CD8-positive, alpha-beta T cell (primary cell): ENCODE measurements at regions of chr5 and their contacts with region 1.

Region 1: GRCh38 chr5:139633295-139634027 is 14.7 kb upstream of the CXXC5 start:
- DNase-seq: peak in 8 of 9 experiments; percentile 45 to 85 (median 71)
- ATAC-seq: peak; percentile 35
- H3K4me3 ChIP-seq: no peak overlapping the region
- H3K4me3 Mint-ChIP-seq: no peak overlapping the region
- H3K27ac ChIP-seq: no peak overlapping the region
- H3K27ac Mint-ChIP-seq: peak overlapping the region; percentile 24
- H3K4me1 ChIP-seq: peaks cover 42% of the 10 kb centered on the region
- H3K4me1 Mint-ChIP-seq: peaks cover 41% of the 10 kb centered on the region
- H3K27me3 ChIP-seq: no peaks in the 10 kb centered on the region
- H3K27me3 Mint-ChIP-seq: no peaks in the 10 kb centered on the region
- CTCF ChIP-seq: peak; percentile 89

Region 2: GRCh38 chr5:139422307-139422893 is 211.1 kb before region 1 on chr5:
- CTCF ChIA-PET with region 1: interaction called, 20 read pairs
- POLR2A ChIA-PET with region 1: no interaction called
- intact Hi-C with region 1: no loop called
- DNase-seq: peak in 8 of 9 experiments; percentile 15 to 86 (median 52)
- ATAC-seq: peak; percentile 99
- H3K4me3 ChIP-seq: no peak overlapping the region
- H3K4me3 Mint-ChIP-seq: no peak overlapping the region
- H3K27ac ChIP-seq: no peak overlapping the region
- H3K27ac Mint-ChIP-seq: no peak overlapping the region
- H3K4me1 ChIP-seq: no peaks in the 10 kb centered on the region
- H3K4me1 Mint-ChIP-seq: peaks cover 5% of the 10 kb centered on the region
- H3K27me3 ChIP-seq: no peaks in the 10 kb centered on the region
- H3K27me3 Mint-ChIP-seq: no peaks in the 10 kb centered on the region
- CTCF ChIP-seq: peak; percentile 89

Region 3: GRCh38 chr5:139574641-139575312 is 58.7 kb before region 1 on chr5:
- CTCF ChIA-PET with region 1: interaction called, 35 read pairs
- POLR2A ChIA-PET with region 1: interaction called, 4 read pairs
- intact Hi-C with region 1: loop called (anchors 2 to 5 kb)
- DNase-seq: peak in 5 of 9 experiments; percentile 16 to 76 (median 45)
- ATAC-seq: peak; percentile 42
- H3K4me3 ChIP-seq: no peak overlapping the region
- H3K4me3 Mint-ChIP-seq: peak overlapping the region; percentile 20
- H3K27ac ChIP-seq: peak overlapping the region in 1 of 2 experiments; percentile 34
- H3K27ac Mint-ChIP-seq: peak overlapping the region; percentile 43
- H3K4me1 ChIP-seq: peaks cover 75% of the 10 kb centered on the region
- H3K4me1 Mint-ChIP-seq: peaks cover 79% of the 10 kb centered on the region
- H3K27me3 ChIP-seq: no peaks in the 10 kb centered on the region
- H3K27me3 Mint-ChIP-seq: no peaks in the 10 kb centered on the region
- CTCF ChIP-seq: peak; percentile 72

Region 4: GRCh38 chr5:139670369-139671095 is 37.1 kb after region 1 on chr5:
- CTCF ChIA-PET with region 1: interaction called, 64 read pairs
- POLR2A ChIA-PET with region 1: interaction called, 24 read pairs
- intact Hi-C with region 1: loop called (anchors 1 kb)
- DNase-seq: peak in 5 of 9 experiments; percentile 34 to 68 (median 53)
- ATAC-seq: peak; percentile 31
- H3K4me3 ChIP-seq: peak overlapping the region; percentile 68 to 72
- H3K4me3 Mint-ChIP-seq: peak overlapping the region; percentile 79
- H3K27ac ChIP-seq: peak overlapping the region; percentile 26 to 88
- H3K27ac Mint-ChIP-seq: peak overlapping the region; percentile 90
- H3K4me1 ChIP-seq: peaks cover 53% of the 10 kb centered on the region
- H3K4me1 Mint-ChIP-seq: peaks cover 47% of the 10 kb centered on the region
- H3K27me3 ChIP-seq: no peaks in the 10 kb centered on the region
- H3K27me3 Mint-ChIP-seq: no peaks in the 10 kb centered on the region
- CTCF ChIP-seq: peak; percentile 28

Region 5: DNA sequence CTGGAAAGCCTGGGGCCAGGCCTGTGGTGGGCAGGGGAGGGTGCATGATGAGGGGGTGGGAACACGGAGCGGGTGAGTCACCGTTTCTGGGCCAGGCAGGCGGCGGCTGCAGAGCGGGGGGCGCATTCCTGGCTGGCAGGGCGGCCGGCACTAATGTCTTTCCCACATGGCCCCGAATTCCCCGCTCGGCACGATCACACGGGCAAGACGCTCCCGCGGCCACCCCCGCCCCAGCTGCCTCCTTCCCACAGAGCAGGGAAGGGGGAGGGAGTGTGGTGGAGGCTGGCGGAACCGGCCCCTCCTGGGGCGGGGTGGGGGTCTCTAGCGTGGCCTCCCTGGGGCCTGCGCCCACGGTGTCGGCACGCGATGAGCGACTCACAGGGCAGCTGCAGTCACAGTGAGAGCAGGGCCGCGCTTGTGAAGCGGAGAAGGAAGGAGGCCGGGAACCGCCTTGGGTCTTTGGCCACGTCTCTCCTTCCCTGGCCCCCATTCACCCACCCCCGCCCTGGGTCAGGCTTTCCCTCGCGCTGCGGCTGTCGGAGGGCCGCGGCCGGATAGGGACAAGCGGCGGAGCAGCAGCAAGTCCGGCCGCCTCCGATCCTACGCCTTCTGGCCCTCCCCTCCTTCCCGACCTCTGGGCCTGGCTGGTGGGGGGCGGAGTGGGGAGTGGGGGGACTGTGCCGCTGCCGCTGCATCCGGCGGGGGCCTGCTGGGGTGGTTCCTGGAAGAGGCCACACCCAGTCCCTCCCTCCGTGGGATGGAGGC is 63.6 kb after region 1 on chr5:
- CTCF ChIA-PET with region 1: interaction called, 150 read pairs
- POLR2A ChIA-PET with region 1: interaction called, 3 read pairs
- intact Hi-C with region 1: no loop called
- DNase-seq: peak in 5 of 9 experiments; percentile 14 to 47 (median 35)
- ATAC-seq: peak; percentile 50
- H3K4me3 ChIP-seq: peak overlapping the region; percentile 42 to 45
- H3K4me3 Mint-ChIP-seq: peak overlapping the region; percentile 80
- H3K27ac ChIP-seq: no peak overlapping the region
- H3K27ac Mint-ChIP-seq: no peak overlapping the region
- H3K4me1 ChIP-seq: peaks cover 34% of the 10 kb centered on the region
- H3K4me1 Mint-ChIP-seq: peaks cover 35% of the 10 kb centered on the region
- H3K27me3 ChIP-seq: peaks cover 0 to 9% of the 10 kb centered on the region in 2 experiments
- H3K27me3 Mint-ChIP-seq: peaks cover 6% of the 10 kb centered on the region
- CTCF ChIP-seq: no peak

Region 6: GRCh38 chr5:139765409-139766217 is 132.2 kb after region 1 on chr5:
- CTCF ChIA-PET with region 1: interaction called, 178 read pairs
- POLR2A ChIA-PET with region 1: interaction called, 12 read pairs
- intact Hi-C with region 1: loop called (anchors 1 kb)
- DNase-seq: peak; percentile 74 to 93 (median 83)
- ATAC-seq: peak; percentile 92
- H3K4me3 ChIP-seq: peak overlapping the region; percentile 60 to 67
- H3K4me3 Mint-ChIP-seq: peak overlapping the region; percentile 67
- H3K27ac ChIP-seq: no peak overlapping the region
- H3K27ac Mint-ChIP-seq: no peak overlapping the region
- H3K4me1 ChIP-seq: peaks cover 20% of the 10 kb centered on the region
- H3K4me1 Mint-ChIP-seq: peaks cover 16% of the 10 kb centered on the region
- H3K27me3 ChIP-seq: peaks cover 5 to 9% of the 10 kb centered on the region in 2 experiments
- H3K27me3 Mint-ChIP-seq: peaks cover 24% of the 10 kb centered on the region
- CTCF ChIP-seq: peak; percentile 100